OCI-LY7 (cell line): ENCODE measurements at regions of chr1 and their contacts with region 1.

Region 1: DNA sequence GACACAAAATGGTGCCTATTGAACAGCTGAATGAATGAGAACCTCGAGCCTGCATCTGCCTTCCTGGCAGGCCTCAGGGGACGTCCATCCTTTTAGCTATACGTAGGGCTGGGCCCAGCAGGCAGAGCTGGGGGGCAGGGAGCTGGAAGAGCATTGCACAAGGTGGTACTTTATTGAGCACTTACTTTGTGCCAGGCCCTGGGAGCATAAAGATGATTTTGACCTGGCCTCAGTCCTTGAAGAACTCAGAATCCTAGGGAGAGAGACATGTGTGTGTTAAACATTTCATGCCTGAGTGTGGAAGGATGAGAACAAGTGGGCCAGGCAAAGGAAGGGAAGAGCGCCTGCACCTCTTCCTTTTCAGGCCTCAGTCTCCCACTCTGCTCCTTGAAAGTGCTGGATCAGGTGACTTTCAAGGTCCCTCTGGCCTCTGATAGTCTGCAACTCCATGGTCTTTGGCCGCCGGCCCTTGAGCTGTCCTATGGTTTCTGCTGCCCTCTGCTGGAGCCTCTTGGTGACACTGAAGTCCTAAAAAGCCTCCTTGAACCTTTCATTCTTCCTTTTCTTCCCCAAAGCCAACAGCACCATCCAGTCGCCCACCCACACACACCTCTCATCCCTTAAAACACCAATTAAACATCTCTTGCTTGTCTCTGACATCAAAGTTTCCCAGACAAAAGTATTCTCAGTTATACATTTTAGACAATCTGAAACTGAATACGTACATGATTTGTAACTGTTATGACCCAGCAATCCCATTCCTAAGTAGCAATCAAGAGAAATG is 3.5 kb upstream of the PEAR1 start:
- DNase-seq: peak; percentile 74
- H3K4me3 ChIP-seq: no peak overlapping the region
- H3K27ac ChIP-seq: no peak overlapping the region
- H3K4me1 ChIP-seq: no peaks in the 10 kb centered on the region
- CTCF ChIP-seq: peak; percentile 86

Region 2: GRCh38 chr1:156786655-156787054 is 103.3 kb before region 1 on chr1:
- CTCF ChIA-PET with region 1: no interaction called
- POLR2A ChIA-PET with region 1: no interaction called
- intact Hi-C with region 1: no loop called
- DNase-seq: no peak
- H3K4me3 ChIP-seq: no peak overlapping the region
- H3K27ac ChIP-seq: no peak overlapping the region
- H3K4me1 ChIP-seq: no peaks in the 10 kb centered on the region
- CTCF ChIP-seq: no peak

Region 3: GRCh38 chr1:156797212-156797871 is 92.7 kb before region 1 on chr1:
- CTCF ChIA-PET with region 1: no interaction called
- POLR2A ChIA-PET with region 1: no interaction called
- intact Hi-C with region 1: loop called (anchors 1 kb)
- DNase-seq: peak; percentile 61
- H3K4me3 ChIP-seq: no peak overlapping the region
- H3K27ac ChIP-seq: no peak overlapping the region
- H3K4me1 ChIP-seq: peaks cover 15% of the 10 kb centered on the region
- CTCF ChIP-seq: peak; percentile 94

Region 4: DNA sequence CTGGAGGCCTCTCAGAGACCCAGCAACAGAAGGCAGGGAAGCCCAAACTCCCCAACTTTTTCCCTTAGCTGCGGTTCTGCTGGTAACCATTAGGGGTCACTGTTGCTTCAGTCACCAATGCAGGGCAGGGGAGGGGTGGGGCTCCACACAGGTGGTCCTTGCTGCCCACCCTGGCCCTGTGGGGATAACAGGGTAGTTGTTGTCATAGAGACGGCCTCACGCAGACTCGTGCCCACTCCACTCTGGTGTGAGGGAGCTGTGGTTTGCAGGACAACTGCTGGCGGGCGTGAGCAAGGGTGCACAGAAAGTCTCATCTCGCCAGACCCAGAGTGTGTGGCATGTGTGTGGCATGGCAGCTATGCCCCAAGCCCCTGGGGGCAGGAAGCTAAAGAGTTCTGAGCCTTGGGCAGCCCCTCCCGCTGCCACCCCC is 51.0 kb before region 1 on chr1:
- CTCF ChIA-PET with region 1: interaction called, 3 read pairs
- POLR2A ChIA-PET with region 1: no interaction called
- intact Hi-C with region 1: loop called (anchors 1 kb)
- DNase-seq: peak; percentile 45
- H3K4me3 ChIP-seq: no peak overlapping the region
- H3K27ac ChIP-seq: no peak overlapping the region
- H3K4me1 ChIP-seq: no peaks in the 10 kb centered on the region
- CTCF ChIP-seq: peak; percentile 94

Region 5: GRCh38 chr1:156899956-156900718 is 10.1 kb after region 1 on chr1:
- CTCF ChIA-PET with region 1: no interaction called
- POLR2A ChIA-PET with region 1: no interaction called
- intact Hi-C with region 1: no loop called
- DNase-seq: no peak
- H3K4me3 ChIP-seq: no peak overlapping the region
- H3K27ac ChIP-seq: no peak overlapping the region
- H3K4me1 ChIP-seq: no peaks in the 10 kb centered on the region
- CTCF ChIP-seq: no peak

Region 6: DNA sequence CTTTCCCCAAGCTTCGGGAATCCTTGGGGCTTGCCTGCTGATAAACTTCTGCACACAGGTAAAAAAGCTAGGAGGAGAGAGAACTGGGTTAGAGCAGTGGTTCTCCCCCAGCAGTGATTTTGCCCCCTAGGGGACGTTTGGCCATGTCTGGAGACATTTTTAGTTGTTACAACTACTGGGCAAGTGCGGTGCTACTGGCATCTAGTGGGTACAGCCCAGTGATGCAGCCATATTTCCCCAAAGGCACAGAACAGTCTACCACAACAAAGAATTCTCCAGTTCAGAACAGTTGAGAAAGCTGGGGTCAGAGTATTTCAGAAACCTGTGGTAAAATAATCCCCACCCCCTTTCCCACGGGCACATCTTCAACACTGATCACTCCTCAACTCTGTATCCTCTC is 71.7 kb after region 1 on chr1:
- CTCF ChIA-PET with region 1: no interaction called
- POLR2A ChIA-PET with region 1: no interaction called
- intact Hi-C with region 1: loop called (anchors 2 kb)
- DNase-seq: peak; percentile 59
- H3K4me3 ChIP-seq: no peak overlapping the region
- H3K27ac ChIP-seq: no peak overlapping the region
- H3K4me1 ChIP-seq: peaks cover 12% of the 10 kb centered on the region
- CTCF ChIP-seq: peak; percentile 80

Region 7: DNA sequence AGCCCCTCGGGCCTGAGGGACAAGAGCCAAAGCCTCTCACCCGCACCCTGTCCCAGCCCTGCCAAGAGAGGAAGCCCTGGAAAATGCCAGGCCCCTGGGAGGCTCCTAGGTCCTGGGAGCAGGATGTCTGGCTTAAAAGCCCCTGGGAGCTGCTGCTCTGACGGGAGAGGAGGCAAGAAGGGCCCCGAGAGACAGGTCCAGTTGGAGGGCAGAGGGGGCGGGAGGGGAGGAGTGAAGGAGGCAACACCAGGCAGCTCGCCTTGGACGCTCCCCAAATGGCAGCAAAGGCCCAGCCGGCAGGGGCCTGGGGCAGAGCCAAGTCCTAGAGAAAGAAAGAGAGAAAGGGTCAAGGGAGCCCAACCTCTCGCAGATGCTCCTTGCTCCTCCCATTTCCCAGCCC is 202.8 kb after region 1 on chr1:
- CTCF ChIA-PET with region 1: no interaction called
- POLR2A ChIA-PET with region 1: no interaction called
- intact Hi-C with region 1: no loop called
- DNase-seq: no peak
- H3K4me3 ChIP-seq: no peak overlapping the region
- H3K27ac ChIP-seq: no peak overlapping the region
- H3K4me1 ChIP-seq: no peaks in the 10 kb centered on the region
- CTCF ChIP-seq: no peak